Heart right ventricle (tissue), 16 donors: ENCODE measurements at regions of chr1 and their contacts with region 1.

Region 1: DNA sequence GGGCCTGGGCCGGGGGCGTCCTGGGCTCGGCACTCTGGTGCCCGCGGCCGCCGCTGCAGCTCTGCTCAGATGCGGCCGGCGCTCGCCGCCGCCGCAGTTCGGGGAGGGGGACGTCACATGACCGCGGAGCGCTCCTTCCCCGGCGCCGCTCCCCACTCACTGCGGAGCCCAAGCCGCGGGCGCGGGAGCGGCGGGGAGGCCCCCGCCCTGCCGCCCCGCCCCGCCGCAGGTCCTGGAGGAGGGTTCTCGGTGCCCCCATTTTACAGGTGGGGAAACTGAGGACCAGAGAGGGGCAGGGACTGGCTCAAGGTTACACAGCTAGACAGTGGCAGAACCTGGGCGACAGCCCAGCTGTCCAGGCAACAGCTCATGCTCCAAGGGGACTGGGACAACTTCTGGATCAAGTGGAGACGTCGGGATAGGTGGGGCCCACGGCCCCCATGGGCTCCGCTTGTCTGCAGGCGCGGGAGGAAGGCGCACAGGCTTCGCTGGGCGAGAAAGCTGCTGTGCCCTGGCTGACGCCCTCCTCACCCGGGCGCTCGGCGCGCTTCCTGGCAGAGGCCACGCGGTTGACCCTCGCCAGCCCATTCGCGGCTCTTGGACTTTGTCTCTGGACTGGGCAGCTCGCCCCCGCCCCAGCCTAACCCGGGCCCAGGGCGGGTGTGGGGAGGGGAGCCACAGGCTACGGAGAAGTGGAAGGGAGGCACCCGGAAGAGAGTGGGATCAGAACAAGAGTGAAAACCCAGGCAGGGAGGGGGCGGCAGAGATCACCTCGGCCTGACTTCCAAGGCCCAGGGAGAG is at the start of gene RAP1GAP:
- DNase-seq: no peak
- ATAC-seq: peak in 3 of 8 donors; percentile 5 to 21 (median 18)
- H3K4me3 ChIP-seq: peak within 1 kb of the TSS in 9 of 10 donors; percentile 8 to 48 (median 43)
- H3K27ac ChIP-seq: no peak within 1 kb of the TSS
- H3K4me1 ChIP-seq: peaks cover 18 to 68% (median 59%) of the 10 kb centered on the region in 9 donors
- H3K27me3 ChIP-seq: peaks cover 6 to 69% (median 43%) of the 10 kb centered on the region in 7 donors
- CTCF ChIP-seq: peak in 1 of 9 donors; percentile 16
- total RNA-seq, gene RAP1GAP: 2.3 to 5.6 (median 4.0) TPM

Region 2: DNA sequence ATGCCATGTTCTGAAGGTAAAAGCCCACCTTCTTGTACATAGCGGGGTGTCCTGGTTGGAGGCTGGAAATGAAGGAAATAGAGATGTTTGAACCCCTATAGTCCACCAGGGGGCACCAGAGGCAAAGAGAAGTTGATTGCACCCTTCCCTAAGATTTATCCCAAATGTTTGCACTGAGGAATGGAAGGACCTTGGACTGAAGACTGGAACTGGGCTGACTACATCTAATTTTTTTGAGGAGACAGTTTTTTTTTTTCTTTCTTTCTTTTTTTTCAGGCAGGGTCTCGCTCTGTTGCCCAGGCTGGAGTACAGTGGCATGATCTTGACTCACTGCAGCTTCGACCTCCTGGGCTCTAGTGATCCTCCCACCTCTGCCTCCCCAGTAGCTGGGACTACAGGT is 437.4 kb before region 1 on chr1:
- intact Hi-C with region 1: loop called in 2 of 10 experiments (anchors 10 kb)
- DNase-seq: peak in 1 of 2 donors; percentile 58
- ATAC-seq: peak; percentile 51 to 75 (median 67)
- H3K4me3 ChIP-seq: no peak overlapping the region
- H3K27ac ChIP-seq: no peak overlapping the region
- H3K4me1 ChIP-seq: peaks cover 0 to 16% (median 3%) of the 10 kb centered on the region in 9 donors
- H3K27me3 ChIP-seq: no peaks in the 10 kb centered on the region
- CTCF ChIP-seq: peak; percentile 72 to 87 (median 77)